RWPE1 (cell line): ENCODE measurements at regions of chr12 and their contacts with region 1.

Region 1: GRCh38 chr12:56628671-56629458 is 1.3 kb downstream of the BAZ2A start:
- DNase-seq: no peak
- H3K27ac ChIP-seq: peak overlapping the region; percentile 87
- CTCF ChIP-seq: no peak

Region 2: DNA sequence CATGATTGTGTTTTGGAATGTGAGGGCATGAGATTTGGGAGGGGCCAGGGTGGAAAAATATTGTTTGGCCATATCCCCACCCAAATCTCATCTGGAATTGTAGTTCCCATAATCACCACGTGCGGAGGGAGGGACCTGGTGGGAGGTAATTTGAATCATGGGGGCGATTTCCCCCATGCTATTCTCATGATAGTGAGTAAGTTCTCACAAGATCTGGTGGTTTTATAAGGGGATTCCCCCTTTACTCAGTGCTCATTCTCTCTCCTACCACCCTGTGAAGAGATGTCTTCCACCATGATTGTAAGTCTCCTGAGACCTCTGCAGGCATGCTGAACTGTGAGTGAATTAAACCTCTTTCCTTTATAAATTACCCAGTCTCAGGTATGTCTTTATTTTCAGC is 976.5 kb before region 1 on chr12:
- CTCF ChIA-PET with region 1: no interaction called
- POLR2A ChIA-PET with region 1: no interaction called
- DNase-seq: no peak
- H3K27ac ChIP-seq: no peak overlapping the region
- CTCF ChIP-seq: no peak

Region 3: GRCh38 chr12:56581418-56582145 is 47.3 kb before region 1 on chr12:
- CTCF ChIA-PET with region 1: interaction called, 11 read pairs
- POLR2A ChIA-PET with region 1: interaction called, 4 read pairs
- DNase-seq: peak; percentile 48
- H3K27ac ChIP-seq: peak overlapping the region; percentile 45; the same call in 1 of the 2 replicates
- CTCF ChIP-seq: no peak

Region 4: GRCh38 chr12:56657416-56658379 is 28.8 kb after region 1 on chr12:
- CTCF ChIA-PET with region 1: no interaction called
- POLR2A ChIA-PET with region 1: no interaction called
- DNase-seq: no peak
- H3K27ac ChIP-seq: no peak overlapping the region; the same call in 1 of the 2 replicates
- CTCF ChIP-seq: no peak